A673 (cell line): ENCODE measurements at regions of chr7 and their contacts with region 1.

Region 1: DNA sequence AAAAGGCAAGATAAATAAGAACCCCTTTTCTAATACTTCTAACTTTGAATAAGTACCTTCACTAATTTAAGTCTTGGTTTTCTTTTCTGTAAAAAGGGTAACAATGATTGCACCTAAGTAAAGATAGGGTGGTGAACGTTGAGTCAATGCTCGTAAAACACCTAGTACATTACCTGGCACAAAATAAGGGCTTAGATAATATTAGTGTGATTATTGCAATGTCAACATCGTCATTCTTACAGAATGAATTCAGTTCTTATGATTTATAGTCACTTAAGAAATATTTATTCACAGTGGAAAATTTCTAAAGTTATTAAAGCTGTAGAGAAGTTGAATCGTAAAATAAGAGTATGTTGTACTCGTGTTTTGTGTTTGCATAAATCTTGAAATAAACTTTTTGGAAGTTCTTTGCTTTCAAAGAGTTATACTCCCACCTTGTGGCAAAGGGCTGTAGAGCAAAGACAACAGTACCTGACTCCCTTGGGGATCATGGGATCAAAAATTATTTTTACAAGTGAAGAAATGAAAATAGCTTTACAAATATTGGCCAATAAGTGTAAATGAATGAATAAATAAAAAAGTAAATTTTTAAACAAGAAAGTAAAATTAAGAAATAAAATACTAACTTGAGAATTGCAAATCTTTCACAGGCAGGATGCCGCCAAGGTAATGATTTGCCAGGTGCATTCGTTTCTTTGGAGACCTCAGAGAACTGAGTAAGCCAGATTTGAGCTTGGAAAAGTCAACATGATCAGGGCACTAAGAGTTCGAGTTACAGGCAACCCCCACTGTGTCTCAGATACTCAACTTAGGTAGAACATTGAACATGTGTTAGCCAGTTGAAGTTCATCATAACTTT is 285.8 kb upstream of the CACNA2D1 start:
- DNase-seq: peak; percentile 66
- H3K4me3 ChIP-seq: no peak overlapping the region
- H3K27ac ChIP-seq: no peak overlapping the region
- H3K4me1 ChIP-seq: no peaks in the 10 kb centered on the region
- H3K27me3 ChIP-seq: no peaks in the 10 kb centered on the region
- CTCF ChIP-seq: peak; percentile 78

Region 2: GRCh38 chr7:81482600-81483186 is 1246.7 kb before region 1 on chr7:
- CTCF ChIA-PET with region 1: no interaction called
- POLR2A ChIA-PET with region 1: no interaction called
- intact Hi-C with region 1: loop called (anchors 5 kb)
- DNase-seq: peak; percentile 46
- H3K4me3 ChIP-seq: no peak overlapping the region
- H3K27ac ChIP-seq: no peak overlapping the region
- H3K4me1 ChIP-seq: no peaks in the 10 kb centered on the region
- H3K27me3 ChIP-seq: no peaks in the 10 kb centered on the region
- CTCF ChIP-seq: peak; percentile 71

Region 3: GRCh38 chr7:81956520-81956919 is 772.9 kb before region 1 on chr7:
- CTCF ChIA-PET with region 1: no interaction called
- POLR2A ChIA-PET with region 1: no interaction called
- intact Hi-C with region 1: loop called (anchors 2 kb)
- DNase-seq: peak; percentile 70
- H3K4me3 ChIP-seq: no peak overlapping the region
- H3K27ac ChIP-seq: no peak overlapping the region
- H3K4me1 ChIP-seq: peaks cover 6% of the 10 kb centered on the region
- H3K27me3 ChIP-seq: no peaks in the 10 kb centered on the region
- CTCF ChIP-seq: peak; percentile 68

Region 4: DNA sequence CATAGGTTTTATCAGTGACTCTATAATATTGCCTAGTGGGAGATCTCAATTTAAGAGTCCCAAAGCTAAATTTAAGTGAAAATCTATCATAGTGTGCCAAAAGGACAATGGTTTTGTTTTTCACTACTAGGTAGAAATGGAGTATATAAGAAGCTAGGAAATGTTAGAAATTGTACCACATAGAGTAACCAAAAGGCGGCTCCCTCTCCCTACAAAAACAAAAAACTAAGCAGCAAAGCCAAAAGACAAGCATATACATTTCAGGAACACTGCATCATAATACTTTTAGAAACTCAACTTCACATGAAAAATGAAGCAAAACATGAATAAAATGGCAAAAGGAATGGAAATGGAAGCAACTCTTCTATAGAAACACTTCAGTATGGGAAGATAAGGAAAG is 557.4 kb before region 1 on chr7:
- CTCF ChIA-PET with region 1: no interaction called
- POLR2A ChIA-PET with region 1: no interaction called
- intact Hi-C with region 1: loop called (anchors 10 kb)
- DNase-seq: no peak
- H3K4me3 ChIP-seq: no peak overlapping the region
- H3K27ac ChIP-seq: no peak overlapping the region
- H3K4me1 ChIP-seq: peaks cover 10% of the 10 kb centered on the region
- H3K27me3 ChIP-seq: no peaks in the 10 kb centered on the region
- CTCF ChIP-seq: peak; percentile 35; the same call in 1 of the 2 replicates

Region 5: DNA sequence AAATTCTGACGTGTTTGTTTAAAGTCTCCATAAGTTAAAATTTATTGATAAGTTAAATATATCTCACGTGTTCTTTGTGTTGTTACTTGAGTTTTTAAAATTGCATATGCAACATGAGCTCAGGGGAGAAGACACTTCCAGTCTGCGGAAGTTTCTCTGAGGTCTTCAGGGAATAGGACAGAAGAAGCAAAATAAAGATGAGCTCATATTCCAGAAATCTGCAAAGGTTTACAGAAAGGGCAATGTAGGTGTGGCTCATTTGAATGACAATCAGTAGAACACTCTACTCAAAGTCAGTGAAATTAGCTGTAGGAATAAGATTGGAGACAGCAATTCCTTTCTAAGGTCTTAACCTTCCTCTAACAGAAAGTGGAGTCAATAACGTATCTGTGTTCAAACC is 339.5 kb before region 1 on chr7:
- CTCF ChIA-PET with region 1: no interaction called
- POLR2A ChIA-PET with region 1: no interaction called
- intact Hi-C with region 1: loop called (anchors 2 kb)
- DNase-seq: peak; percentile 66
- H3K4me3 ChIP-seq: no peak overlapping the region
- H3K27ac ChIP-seq: peak overlapping the region; percentile 95
- H3K4me1 ChIP-seq: peaks cover 89% of the 10 kb centered on the region
- H3K27me3 ChIP-seq: no peaks in the 10 kb centered on the region
- CTCF ChIP-seq: no peak